ENCODE measurements at regions of chr5 and their contacts with region 1.

Region 1: GRCh38 chr5:157342822-157343402 is 77.0 kb downstream of the CYFIP2 start:
- DNase-seq: peak in 2 of 5 donors; percentile 15 to 21
- H3K4me3 ChIP-seq: no peak overlapping the region
- H3K4me3 Mint-ChIP-seq: peak overlapping the region in 1 of 8 donors; percentile 8
- H3K27ac ChIP-seq: no peak overlapping the region
- H3K27ac Mint-ChIP-seq: peak overlapping the region in 5 of 7 donors; percentile 18 to 89 (median 41)
- H3K4me1 ChIP-seq: peaks cover 15% of the 10 kb centered on the region
- H3K4me1 Mint-ChIP-seq: peaks cover 19 to 29% (median 24%) of the 10 kb centered on the region in 4 donors
- H3K27me3 ChIP-seq: no peaks in the 10 kb centered on the region
- H3K27me3 Mint-ChIP-seq: no peaks in the 10 kb centered on the region

Region 2: DNA sequence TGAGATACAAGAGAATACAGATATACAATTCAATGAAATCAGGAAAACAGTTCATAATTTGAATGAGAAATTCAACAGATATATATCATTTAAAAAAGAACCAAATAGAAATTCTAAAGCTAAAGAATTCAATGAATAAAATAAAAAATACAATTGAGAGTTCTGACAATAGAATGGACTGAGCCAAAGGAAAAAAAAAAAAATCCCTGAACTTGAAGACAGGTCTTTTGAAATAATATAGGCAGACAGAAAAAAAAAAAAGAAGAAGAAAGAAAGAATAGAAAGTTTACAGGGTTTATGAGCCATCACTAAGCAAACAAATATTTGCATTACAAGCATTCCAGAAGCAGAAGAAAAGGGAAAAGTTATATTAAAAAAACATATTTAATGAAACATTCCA is 221.2 kb before region 1 on chr5:
- CTCF ChIA-PET with region 1: no interaction called
- POLR2A ChIA-PET with region 1: no interaction called
- intact Hi-C with region 1: no loop called
- DNase-seq: no peak
- H3K4me3 ChIP-seq: no peak overlapping the region
- H3K4me3 Mint-ChIP-seq: no peak overlapping the region
- H3K27ac ChIP-seq: no peak overlapping the region
- H3K27ac Mint-ChIP-seq: no peak overlapping the region
- H3K4me1 ChIP-seq: no peaks in the 10 kb centered on the region
- H3K4me1 Mint-ChIP-seq: peaks cover under 1 to 5% (median 1%) of the 10 kb centered on the region in 4 donors
- H3K27me3 ChIP-seq: no peaks in the 10 kb centered on the region
- H3K27me3 Mint-ChIP-seq: no peaks in the 10 kb centered on the region

Region 3: GRCh38 chr5:157354800-157355199 is 11.9 kb after region 1 on chr5:
- CTCF ChIA-PET with region 1: interaction called, 16 read pairs
- POLR2A ChIA-PET with region 1: interaction called, 7 read pairs
- intact Hi-C with region 1: no loop called
- DNase-seq: no peak
- H3K4me3 ChIP-seq: no peak overlapping the region
- H3K4me3 Mint-ChIP-seq: no peak overlapping the region
- H3K27ac ChIP-seq: no peak overlapping the region
- H3K27ac Mint-ChIP-seq: peak overlapping the region in 3 of 7 donors; percentile 13 to 48 (median 14)
- H3K4me1 ChIP-seq: peaks cover 4% of the 10 kb centered on the region
- H3K4me1 Mint-ChIP-seq: peaks cover 21 to 29% (median 23%) of the 10 kb centered on the region in 4 donors
- H3K27me3 ChIP-seq: no peaks in the 10 kb centered on the region
- H3K27me3 Mint-ChIP-seq: no peaks in the 10 kb centered on the region

Region 4: DNA sequence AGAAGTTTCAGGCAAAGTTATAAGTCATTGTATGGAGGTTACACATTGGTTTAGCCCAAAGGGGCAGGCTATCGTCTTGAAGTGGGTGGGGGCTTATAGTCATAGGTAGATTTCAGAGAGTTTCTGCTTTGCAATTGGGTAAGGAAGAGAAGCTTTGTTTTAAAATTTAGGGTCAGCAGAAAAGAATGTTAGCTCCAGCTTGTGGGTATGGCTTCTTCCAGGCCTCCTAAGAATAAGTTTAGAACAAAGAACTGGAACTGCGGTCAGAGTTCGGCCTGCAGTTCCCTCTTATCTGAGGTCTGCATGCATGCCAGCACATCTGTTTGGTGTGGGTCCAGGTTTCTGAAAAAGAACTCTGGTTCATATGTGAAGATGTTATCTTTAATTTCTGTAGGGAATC is 19.1 kb after region 1 on chr5:
- CTCF ChIA-PET with region 1: interaction called, 16 read pairs
- POLR2A ChIA-PET with region 1: interaction called, 3 read pairs
- intact Hi-C with region 1: no loop called
- DNase-seq: no peak
- H3K4me3 ChIP-seq: no peak overlapping the region
- H3K4me3 Mint-ChIP-seq: no peak overlapping the region
- H3K27ac ChIP-seq: no peak overlapping the region
- H3K27ac Mint-ChIP-seq: peak overlapping the region in 5 of 7 donors; percentile 11 to 90 (median 43)
- H3K4me1 ChIP-seq: no peaks in the 10 kb centered on the region
- H3K4me1 Mint-ChIP-seq: peaks cover 2 to 7% (median 4%) of the 10 kb centered on the region in 4 donors
- H3K27me3 ChIP-seq: no peaks in the 10 kb centered on the region
- H3K27me3 Mint-ChIP-seq: no peaks in the 10 kb centered on the region

Region 5: DNA sequence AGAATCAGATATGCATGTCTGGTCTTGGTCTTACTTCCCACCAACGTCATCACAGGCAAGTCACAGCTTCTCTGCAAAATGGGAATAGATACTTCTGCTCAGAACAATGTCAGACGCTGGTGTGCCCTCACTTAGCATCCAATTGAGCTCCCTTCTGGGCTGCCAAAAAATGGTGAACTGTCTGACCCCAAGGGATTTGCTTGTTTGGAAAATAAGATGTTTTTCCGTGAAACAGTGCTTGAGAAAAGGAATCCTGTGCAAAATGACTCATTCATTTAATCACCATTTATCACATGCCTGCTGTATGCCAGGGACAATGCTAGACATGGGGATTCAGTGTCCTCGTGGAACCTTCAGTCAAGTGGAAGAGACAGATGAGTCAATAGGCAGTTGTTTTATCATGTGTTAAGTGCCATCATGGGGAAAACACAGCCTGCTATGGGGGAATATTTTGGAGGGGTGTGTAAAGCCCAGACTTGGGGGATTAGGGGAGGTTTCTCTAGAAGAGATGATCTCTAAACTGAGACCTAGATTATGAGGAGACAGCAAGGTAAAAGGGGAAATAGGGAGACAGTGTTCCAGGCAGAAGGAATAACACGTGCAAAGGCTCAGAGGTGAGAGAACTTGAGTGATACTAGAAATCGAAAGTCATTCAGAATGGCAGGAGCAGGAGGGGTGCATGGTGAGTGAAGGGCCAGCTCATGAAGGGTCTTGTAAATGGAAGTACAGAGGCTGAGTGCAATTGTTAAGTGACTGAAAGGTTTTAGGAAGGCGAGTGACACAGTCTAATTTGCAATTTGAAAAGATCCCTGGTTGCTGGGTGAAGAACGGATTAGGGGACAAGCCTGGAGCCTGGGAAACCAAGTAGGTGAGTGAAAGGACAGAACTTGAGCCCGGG is 121.0 kb after region 1 on chr5:
- CTCF ChIA-PET with region 1: no interaction called
- POLR2A ChIA-PET with region 1: no interaction called
- intact Hi-C with region 1: no loop called
- DNase-seq: no peak
- H3K4me3 ChIP-seq: no peak overlapping the region
- H3K4me3 Mint-ChIP-seq: peak overlapping the region in 1 of 8 donors; percentile 7
- H3K27ac ChIP-seq: no peak overlapping the region
- H3K27ac Mint-ChIP-seq: peak overlapping the region in 3 of 7 donors; percentile 22 to 44 (median 38)
- H3K4me1 ChIP-seq: peaks cover 11% of the 10 kb centered on the region
- H3K4me1 Mint-ChIP-seq: peaks cover 15 to 25% (median 22%) of the 10 kb centered on the region in 4 donors
- H3K27me3 ChIP-seq: no peaks in the 10 kb centered on the region
- H3K27me3 Mint-ChIP-seq: peaks cover 8 to 9% of the 10 kb centered on the region in 2 donors